HEK293 (cell line): ENCODE measurements at regions of chr20 and their contacts with region 1.

Region 1: DNA sequence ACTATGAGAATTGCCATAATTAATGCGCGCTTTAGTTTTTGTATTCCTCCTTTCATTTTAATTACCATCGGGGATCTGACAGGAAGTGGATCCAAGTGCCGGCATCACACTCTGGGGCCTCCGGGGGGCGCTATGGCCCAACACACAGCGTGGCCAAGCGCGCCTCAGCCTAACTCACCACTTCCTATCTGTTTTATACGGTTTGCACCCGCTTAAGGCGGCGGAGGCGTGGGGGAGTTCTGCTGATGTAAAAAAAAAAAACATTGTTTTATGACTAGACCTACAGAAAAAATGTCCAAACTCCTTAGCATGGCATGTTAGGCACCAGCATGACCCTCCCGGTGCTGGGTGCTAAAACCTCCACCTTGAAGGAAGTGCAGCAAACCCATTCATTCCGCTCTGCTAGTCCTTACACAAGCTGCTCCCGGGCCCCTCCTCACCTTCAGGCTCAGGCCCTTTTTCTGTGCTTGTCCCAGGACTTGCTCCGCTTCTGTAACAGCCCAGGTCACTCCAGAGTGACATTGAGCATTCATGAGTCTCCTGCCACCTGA is 4.5 kb upstream of the EBF4 start:
- H3K4me3 ChIP-seq: no peak overlapping the region
- H3K27ac ChIP-seq: peak overlapping the region; percentile 22; the same call in 1 of the 2 replicates
- H3K4me1 ChIP-seq: 0 out of 2 replicates have a peak, but pooled peaks cover 2% of the 10 kb centered on the region
- CTCF ChIP-seq: 0 out of 2 replicates have a peak, but pooled peaks have one; percentile 14

Region 2: GRCh38 chr20:2515203-2515602 is 172.9 kb before region 1 on chr20:
- CTCF ChIA-PET with region 1: interaction called, 10 read pairs
- POLR2A ChIA-PET with region 1: no interaction called
- H3K4me3 ChIP-seq: no peak overlapping the region
- H3K27ac ChIP-seq: no peak overlapping the region
- H3K4me1 ChIP-seq: no peaks in the 10 kb centered on the region
- CTCF ChIP-seq: no peak

Region 3: DNA sequence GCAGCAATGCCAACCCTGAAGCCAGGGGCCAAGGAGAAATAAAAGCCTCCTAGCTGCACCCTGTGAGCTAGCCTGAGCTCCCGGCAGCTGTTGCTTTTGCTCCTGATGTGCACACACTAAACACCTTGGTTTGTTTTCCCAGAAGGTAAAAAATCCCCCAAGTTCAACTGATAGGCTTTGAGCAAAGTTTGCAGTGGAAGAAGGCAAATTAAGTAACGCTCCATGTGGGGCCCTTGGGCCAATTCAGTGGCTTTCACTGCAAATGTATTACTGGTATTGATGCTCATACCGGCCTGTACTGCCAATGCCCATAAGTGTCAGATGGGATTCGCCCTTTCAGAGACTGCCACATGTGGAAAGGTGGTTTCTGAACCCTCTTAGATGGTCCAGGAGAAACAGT is 14.7 kb before region 1 on chr20:
- CTCF ChIA-PET with region 1: interaction called, 29 read pairs
- POLR2A ChIA-PET with region 1: interaction called, 3 read pairs
- H3K4me3 ChIP-seq: no peak overlapping the region
- H3K27ac ChIP-seq: no peak overlapping the region
- H3K4me1 ChIP-seq: no peaks in the 10 kb centered on the region
- CTCF ChIP-seq: no peak

Region 4: DNA sequence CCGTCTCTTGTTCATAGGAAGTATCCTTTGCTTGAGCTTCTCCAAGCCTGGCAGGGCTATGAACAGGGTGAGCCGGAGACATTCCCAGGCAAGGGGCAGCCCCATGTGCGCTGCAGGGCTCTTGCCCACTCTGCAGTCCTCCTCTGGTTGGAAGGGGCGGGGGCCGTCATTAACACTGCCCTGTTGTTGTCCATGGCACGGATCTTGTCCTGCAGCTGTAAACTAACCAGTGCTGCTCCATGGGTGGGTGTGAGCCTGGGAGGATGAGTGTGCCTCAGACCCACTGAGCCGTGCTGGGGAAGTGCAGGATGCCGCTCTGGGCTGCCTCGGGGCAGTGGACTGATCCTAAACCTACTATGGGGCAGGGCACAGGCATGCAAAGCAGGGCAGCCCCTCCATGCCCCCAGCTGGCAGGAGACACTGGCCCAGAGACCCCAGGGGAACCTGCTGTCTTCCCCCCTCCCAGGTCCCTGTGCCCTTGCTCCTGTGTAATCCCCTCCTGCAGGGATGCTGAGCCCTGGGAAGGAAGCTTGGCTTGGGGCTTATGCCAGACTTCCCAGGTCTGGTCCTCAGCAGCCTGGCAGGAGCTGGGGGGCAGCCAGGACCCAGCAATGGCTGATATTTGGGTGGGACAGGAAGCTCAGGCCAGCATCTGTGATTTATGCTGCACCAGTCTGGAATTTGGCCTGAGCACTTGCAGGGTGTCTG is 13.0 kb after region 1 on chr20:
- CTCF ChIA-PET with region 1: interaction called, 10 read pairs
- POLR2A ChIA-PET with region 1: interaction called, 4 read pairs
- H3K4me3 ChIP-seq: no peak overlapping the region
- H3K27ac ChIP-seq: no peak overlapping the region
- H3K4me1 ChIP-seq: no peaks in the 10 kb centered on the region
- CTCF ChIP-seq: no peak

Region 5: GRCh38 chr20:2742934-2743559 is 54.9 kb after region 1 on chr20:
- CTCF ChIA-PET with region 1: interaction called, 29 read pairs
- POLR2A ChIA-PET with region 1: no interaction called
- H3K4me3 ChIP-seq: no peak overlapping the region
- H3K27ac ChIP-seq: no peak overlapping the region
- H3K4me1 ChIP-seq: no peaks in the 10 kb centered on the region
- CTCF ChIP-seq: peak; percentile 73

Region 6: GRCh38 chr20:2752567-2753460 is 64.7 kb after region 1 on chr20:
- CTCF ChIA-PET with region 1: interaction called, 48 read pairs
- POLR2A ChIA-PET with region 1: no interaction called
- H3K4me3 ChIP-seq: peak overlapping the region; percentile 34
- H3K27ac ChIP-seq: peak overlapping the region; percentile 70; the same call in 1 of the 2 replicates
- H3K4me1 ChIP-seq: peaks cover 3% of the 10 kb centered on the region
- CTCF ChIP-seq: peak; percentile 88

Region 7: DNA sequence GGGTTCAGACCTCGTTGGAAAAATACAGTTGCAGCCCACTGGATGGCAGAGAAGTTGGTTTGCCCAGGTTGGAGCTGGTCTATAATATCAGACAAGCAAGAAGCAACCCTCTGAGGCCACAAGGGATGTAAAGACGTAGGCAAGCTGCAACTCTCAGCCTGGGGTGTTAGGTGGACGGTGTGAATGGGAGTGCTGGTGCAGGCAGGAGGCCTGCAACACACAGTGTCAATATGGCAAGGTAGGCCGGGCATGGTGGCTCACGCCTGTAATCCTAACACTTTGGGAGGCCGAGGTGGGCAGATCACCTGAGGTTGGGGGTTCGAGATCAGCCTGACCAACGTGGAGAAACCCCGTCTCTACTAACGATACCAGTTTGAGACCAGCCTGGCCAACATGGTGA is 163.0 kb after region 1 on chr20:
- CTCF ChIA-PET with region 1: interaction called, 20 read pairs
- POLR2A ChIA-PET with region 1: no interaction called
- H3K4me3 ChIP-seq: no peak overlapping the region
- H3K27ac ChIP-seq: no peak overlapping the region
- H3K4me1 ChIP-seq: no peaks in the 10 kb centered on the region
- CTCF ChIP-seq: no peak

Region 8: GRCh38 chr20:2932498-2932897 is 244.4 kb after region 1 on chr20:
- CTCF ChIA-PET with region 1: no interaction called
- POLR2A ChIA-PET with region 1: no interaction called
- H3K4me3 ChIP-seq: no peak overlapping the region
- H3K27ac ChIP-seq: no peak overlapping the region
- H3K4me1 ChIP-seq: no peaks in the 10 kb centered on the region
- CTCF ChIP-seq: no peak